ENCODE measurements at regions of chr5 and their contacts with region 1.

Region 1: GRCh38 chr5:81751009-81751835 is at the start of gene SSBP2:
- DNase-seq: peak; percentile 99
- ATAC-seq: peak; percentile 96
- total RNA-seq, gene SSBP2: 55.4 TPM

Region 2: DNA sequence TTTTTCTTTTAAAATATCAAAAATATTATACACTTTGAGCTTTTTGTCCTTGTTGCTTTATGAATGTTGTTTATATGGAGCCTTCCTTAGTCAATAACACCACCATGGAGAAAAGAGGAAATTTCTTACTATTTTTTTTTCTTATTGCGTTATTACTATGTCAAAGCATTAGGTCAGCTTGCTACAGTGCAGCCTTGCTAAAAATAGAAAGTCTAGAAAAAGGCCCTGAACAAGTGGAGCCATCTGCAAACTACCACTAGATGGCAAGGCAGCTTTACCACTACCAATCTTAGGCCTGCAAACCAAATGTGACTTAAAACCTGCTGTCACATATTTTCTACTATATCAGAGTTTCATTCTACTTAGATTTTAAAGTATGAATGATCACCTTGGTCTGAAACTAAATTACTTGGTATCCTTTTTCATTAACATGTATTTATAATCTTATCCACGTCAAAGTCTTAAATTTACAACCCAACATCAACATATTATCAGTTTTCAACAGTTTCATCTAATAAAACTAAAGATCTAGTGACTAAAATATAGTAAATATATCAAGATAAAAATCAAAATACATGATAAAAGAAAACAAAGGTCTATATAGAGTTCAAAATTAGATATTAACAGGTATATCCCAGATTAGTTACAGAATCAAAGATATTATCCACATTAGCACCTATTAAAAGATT is 244.2 kb before region 1 on chr5:
- intact Hi-C with region 1: loop called (anchors 2 kb)
- DNase-seq: no peak
- ATAC-seq: peak; percentile 99

Region 3: GRCh38 chr5:81579262-81579924 is 171.8 kb before region 1 on chr5:
- intact Hi-C with region 1: no loop called
- DNase-seq: no peak
- ATAC-seq: peak; percentile 57

Region 4: DNA sequence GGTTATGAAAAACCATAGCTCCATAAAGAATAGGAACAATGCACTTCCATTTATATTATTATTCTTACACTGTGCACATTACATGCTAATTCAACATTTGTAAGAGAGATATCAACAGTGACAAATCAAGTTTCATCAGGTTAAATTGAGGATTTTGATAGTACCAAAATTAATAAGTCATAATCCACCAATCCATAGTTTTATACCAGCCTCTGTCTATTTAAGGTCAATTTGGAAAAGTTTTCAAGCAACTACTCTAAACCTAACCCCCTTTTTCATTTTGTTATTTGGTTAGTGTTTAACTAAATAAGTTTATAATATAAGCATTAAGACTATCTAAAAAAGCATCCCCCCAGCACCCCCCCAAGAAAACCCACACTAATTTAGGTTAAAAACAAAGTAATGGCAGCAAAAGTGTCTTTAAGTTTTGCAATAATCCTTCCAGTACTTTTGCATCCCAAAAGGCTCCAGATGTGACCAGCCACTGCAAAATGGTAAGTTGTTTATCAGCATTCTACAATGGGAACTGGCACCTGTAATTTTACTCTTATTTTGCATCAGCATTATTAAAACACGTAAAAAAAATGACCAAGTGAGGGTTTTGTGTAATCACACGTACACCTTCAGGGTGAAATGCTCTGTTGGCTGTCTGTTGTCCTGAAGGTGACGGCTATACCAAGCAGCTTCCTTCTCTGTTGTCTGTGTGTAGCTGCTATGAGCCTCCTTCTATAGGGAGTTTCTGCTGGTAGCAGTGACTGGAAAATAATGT is 36.4 kb after region 1 on chr5:
- intact Hi-C with region 1: loop called (anchors 2 kb)
- DNase-seq: no peak
- ATAC-seq: peak; percentile 71

Region 5: GRCh38 chr5:81971712-81972495 is 220.7 kb after region 1 on chr5 and contains the start of gene ATG10:
- intact Hi-C with region 1: loop called (anchors 1 kb)
- DNase-seq: peak; percentile 95
- ATAC-seq: peak; percentile 100
- total RNA-seq, gene ATG10: 3.9 TPM

Measured in Right ventricle myocardium inferior (tissue), 1 donor.